B cell (primary cell): ENCODE measurements at regions of chr12 and their contacts with region 1.

Region 1: DNA sequence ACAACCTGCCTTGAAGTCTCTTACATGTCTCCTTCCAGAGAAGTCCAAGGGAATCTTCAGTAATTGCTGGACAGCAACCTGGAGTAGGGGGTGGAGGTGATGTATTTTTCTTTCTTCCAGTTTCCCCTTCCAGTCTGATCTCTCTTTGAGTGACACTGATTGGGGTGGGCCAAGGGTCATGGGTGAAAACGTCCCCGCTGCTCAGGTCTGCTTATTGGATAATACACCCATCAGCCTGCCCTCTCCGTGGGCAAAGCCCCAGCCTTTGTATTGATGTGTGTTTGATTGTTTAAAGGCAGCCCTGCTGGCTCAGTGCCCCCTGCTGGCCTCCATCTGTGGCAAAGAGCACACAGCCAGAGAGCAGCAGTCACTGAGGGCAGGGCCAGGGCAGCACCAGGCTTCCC is 35.7 kb upstream of the ATP2A2 start:
- DNase-seq: peak; percentile 59
- ATAC-seq: peak; percentile 65
- H3K4me3 ChIP-seq: no peak overlapping the region
- H3K4me3 Mint-ChIP-seq: no peak overlapping the region
- H3K27ac ChIP-seq: no peak overlapping the region
- H3K27ac Mint-ChIP-seq: no peak overlapping the region
- H3K4me1 ChIP-seq: peaks cover 0 to 5% of the 10 kb centered on the region in 2 donors
- H3K4me1 Mint-ChIP-seq: peaks cover 7% of the 10 kb centered on the region
- H3K27me3 ChIP-seq: no peaks in the 10 kb centered on the region
- H3K27me3 Mint-ChIP-seq: peaks cover 9% of the 10 kb centered on the region
- CTCF ChIP-seq: peak; percentile 65

Region 2: DNA sequence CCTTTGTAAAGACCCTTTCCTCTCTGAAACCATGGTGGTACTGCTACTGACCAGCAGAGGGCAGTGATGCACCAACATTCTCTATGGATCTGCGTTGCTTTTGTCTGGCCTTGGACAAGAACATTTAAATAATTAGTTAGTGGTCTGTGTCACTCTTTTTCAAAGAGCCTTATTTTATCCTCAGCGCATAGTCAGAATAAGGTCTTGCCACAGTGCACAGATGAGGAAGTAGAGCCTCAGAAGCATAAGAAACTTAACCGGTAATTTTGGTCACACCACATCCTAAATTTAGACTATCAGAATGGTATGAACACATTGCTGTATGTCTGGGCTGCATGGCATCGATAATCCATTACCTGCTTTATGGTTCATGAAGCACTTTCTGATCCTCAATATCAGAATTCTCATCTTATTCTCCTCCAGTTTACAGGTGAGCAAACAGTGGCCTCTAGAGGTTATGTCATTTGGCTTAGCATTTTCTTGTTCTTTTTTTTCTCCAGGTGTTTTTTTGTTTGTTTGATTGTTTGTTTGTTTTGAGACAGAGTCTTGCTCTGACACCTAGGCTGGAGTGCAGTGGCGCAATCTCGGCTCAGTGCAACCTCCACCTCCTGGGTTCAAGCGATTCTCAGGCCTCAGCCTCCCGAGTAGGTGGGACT is 144.9 kb before region 1 on chr12:
- CTCF ChIA-PET with region 1: interaction called, 11 read pairs
- POLR2A ChIA-PET with region 1: no interaction called
- intact Hi-C with region 1: no loop called
- DNase-seq: peak; percentile 91
- ATAC-seq: peak; percentile 98
- H3K4me3 ChIP-seq: peak overlapping the region in 2 of 5 experiments; percentile 15 to 21
- H3K4me3 Mint-ChIP-seq: peak overlapping the region; percentile 67
- H3K27ac ChIP-seq: peak overlapping the region; percentile 72 to 73
- H3K27ac Mint-ChIP-seq: peak overlapping the region; percentile 81
- H3K4me1 ChIP-seq: peaks cover 21 to 22% of the 10 kb centered on the region in 2 donors
- H3K4me1 Mint-ChIP-seq: peaks cover 24% of the 10 kb centered on the region
- H3K27me3 ChIP-seq: no peaks in the 10 kb centered on the region
- H3K27me3 Mint-ChIP-seq: no peaks in the 10 kb centered on the region
- CTCF ChIP-seq: peak; percentile 93